Activated naive CD4-positive, alpha-beta T cell treated with anti-CD3 and anti-CD28 coated beads for 36 hours (primary cell): ENCODE measurements at regions of chr2 and their contacts with region 1.

Region 1: GRCh38 chr2:164737612-164738081 is 104.0 kb downstream of the COBLL1 start:
- DNase-seq: peak; percentile 38
- H3K4me3 Mint-ChIP-seq: no peak overlapping the region
- H3K27ac Mint-ChIP-seq: no peak overlapping the region
- H3K4me1 Mint-ChIP-seq: no peaks in the 10 kb centered on the region
- H3K27me3 Mint-ChIP-seq: no peaks in the 10 kb centered on the region

Region 2: DNA sequence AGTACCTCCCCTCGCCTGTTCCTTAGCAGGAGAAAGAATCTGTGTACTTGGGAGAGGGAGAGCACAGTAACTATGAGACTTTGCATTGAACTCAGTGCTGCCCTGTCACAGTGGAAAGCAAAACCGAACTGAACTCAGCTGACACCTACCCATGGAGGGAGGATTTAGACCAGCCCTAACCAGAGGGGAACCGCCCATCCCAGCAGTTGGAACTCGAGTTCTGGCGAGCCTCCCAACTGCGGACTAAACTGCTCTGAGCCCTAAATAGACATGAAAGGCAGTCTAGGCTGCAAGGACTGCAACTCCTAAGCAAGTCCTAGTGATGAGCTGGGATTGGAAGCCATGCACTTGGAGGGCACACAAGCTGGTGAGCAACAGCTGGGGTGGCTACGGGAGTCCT is 226.8 kb before region 1 on chr2:
- CTCF ChIA-PET with region 1: no interaction called
- intact Hi-C with region 1: no loop called
- DNase-seq: no peak
- H3K4me3 Mint-ChIP-seq: no peak overlapping the region
- H3K27ac Mint-ChIP-seq: no peak overlapping the region
- H3K4me1 Mint-ChIP-seq: no peaks in the 10 kb centered on the region
- H3K27me3 Mint-ChIP-seq: no peaks in the 10 kb centered on the region

Region 3: DNA sequence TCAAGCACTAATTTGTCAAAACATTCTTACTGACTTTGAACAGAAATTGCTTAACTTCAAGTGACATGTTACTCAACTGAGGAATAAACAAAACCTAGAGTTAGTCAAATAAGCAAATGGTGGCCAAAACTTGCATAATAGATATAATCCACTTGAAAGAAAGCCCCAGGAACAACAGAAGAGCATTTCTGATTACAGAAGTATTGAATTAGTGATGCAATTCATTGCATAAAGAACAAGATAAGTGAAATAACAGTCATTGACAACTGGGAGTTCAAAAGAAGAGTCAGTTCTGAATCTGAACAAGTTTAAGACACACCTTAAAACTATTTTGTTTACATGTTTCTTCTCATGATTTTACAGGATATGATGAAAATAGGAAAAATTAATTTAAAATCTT is 73.2 kb after region 1 on chr2:
- CTCF ChIA-PET with region 1: no interaction called
- intact Hi-C with region 1: no loop called
- DNase-seq: no peak
- H3K4me3 Mint-ChIP-seq: no peak overlapping the region
- H3K27ac Mint-ChIP-seq: no peak overlapping the region
- H3K4me1 Mint-ChIP-seq: no peaks in the 10 kb centered on the region
- H3K27me3 Mint-ChIP-seq: no peaks in the 10 kb centered on the region

Region 4: DNA sequence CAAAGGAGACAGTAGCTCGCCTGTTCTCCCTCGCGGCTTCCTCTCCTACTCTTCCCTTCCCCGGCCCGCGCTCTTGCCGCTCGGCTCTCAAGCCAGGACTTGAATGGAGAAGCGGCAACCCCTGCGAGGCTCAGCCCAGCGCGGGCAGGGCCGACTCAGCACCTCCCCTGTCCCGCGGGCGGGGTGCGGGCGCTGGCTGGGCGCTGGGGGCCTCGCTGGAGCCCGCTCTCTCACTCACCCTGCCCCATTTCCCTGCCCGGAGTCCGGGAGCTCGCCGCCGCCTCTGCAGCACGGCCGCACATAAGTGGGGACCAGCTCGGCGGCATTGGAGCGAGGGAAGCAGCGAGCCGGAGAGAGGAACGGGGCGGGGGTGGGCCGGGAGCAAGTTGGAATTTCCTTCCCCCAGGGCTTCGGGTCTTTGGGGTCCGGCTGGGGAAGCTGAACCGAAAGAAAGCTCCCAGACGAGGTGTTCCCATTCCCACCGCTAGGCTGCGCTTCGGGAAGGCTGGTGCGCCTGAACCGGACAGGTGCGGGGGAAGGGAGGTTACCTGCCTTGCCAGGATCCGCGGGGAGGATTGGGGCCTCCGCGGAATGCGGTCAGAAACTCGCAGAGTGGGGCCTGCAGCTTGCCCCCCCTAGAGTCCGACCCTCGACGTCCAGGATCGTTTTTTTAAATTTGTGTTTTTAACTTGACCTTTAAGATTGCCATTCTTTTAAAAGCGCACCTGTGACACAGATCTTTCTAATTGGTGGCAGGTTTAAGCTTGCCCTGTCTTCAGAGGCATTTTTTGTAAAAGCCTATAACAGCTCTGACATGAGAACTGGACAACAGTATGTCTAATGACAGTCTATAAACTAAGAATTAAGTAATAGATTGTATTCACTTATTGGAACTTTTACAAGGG is 104.3 kb after region 1 on chr2 and contains the start of gene COBLL1:
- CTCF ChIA-PET with region 1: interaction called, 4 read pairs
- intact Hi-C with region 1: loop called (anchors 5 kb)
- DNase-seq: peak; percentile 47
- H3K4me3 Mint-ChIP-seq: peak within 1 kb of the TSS; percentile 68
- H3K27ac Mint-ChIP-seq: no peak within 1 kb of the TSS
- H3K4me1 Mint-ChIP-seq: peaks cover 5% of the 10 kb centered on the region
- H3K27me3 Mint-ChIP-seq: peaks cover 31% of the 10 kb centered on the region
- total RNA-seq, gene COBLL1: not detected

Region 5: DNA sequence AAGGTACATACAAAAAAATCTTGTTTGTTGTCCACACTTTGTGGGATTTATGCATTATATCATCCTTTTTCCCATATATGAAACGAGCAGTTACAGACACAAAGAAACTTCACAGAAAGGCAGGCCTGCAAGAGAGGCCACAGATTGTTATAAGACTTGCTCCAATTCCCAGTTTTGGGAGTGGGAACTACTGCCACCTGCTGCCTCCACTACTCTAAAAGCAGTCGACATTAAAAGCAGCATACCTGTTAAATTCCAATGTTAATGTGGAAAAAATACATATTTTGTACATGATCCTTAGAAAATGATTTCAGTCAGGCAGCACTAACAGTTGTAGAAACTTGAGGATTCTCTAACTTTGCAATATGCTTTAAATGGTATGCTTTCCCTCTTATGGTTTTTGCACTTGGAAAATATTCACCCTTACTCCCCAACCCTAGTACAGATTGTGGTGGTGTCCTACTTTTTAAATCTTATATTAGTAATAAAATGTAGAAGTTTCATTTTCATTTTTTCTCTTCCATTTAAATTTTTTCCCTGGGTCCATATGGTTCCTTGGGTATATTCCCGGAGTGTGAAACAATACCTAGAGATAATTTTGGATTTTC is 179.8 kb after region 1 on chr2:
- CTCF ChIA-PET with region 1: no interaction called
- intact Hi-C with region 1: loop called (anchors 1 kb)
- DNase-seq: peak; percentile 6
- H3K4me3 Mint-ChIP-seq: no peak overlapping the region
- H3K27ac Mint-ChIP-seq: no peak overlapping the region
- H3K4me1 Mint-ChIP-seq: no peaks in the 10 kb centered on the region
- H3K27me3 Mint-ChIP-seq: peaks cover 6% of the 10 kb centered on the region

Region 6: DNA sequence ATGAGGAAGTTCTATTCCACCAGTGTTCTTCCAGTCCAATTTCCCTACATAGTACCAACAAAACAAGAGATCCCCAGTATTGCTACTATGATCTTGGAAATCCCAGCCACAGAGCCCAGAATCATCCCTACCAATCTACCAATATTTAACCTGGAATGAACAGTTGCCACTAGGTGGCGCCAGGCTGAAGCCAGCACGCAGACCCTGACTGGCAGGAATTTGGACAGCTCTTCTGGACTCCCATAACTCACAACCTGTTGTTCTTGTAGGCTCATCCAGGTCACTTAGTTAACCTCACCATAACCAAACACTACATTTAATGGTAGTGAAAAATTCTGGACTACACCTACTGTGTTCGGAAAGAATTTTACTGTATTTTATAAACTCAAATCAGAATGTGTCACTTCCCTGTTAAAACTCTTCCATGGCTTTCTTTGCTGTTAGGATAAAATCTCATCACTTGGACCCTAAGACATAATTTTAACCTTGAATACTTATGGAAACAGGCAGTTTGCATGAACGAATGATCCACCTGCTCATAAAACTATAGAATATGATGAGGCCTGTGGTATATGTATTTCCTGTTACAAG is 277.5 kb after region 1 on chr2:
- CTCF ChIA-PET with region 1: no interaction called
- intact Hi-C with region 1: loop called (anchors 1 kb)
- DNase-seq: peak; percentile 74
- H3K4me3 Mint-ChIP-seq: no peak overlapping the region
- H3K27ac Mint-ChIP-seq: no peak overlapping the region
- H3K4me1 Mint-ChIP-seq: no peaks in the 10 kb centered on the region
- H3K27me3 Mint-ChIP-seq: peaks cover 9% of the 10 kb centered on the region

Region 7: GRCh38 chr2:165293440-165294353 is 556.0 kb after region 1 on chr2:
- CTCF ChIA-PET with region 1: no interaction called
- intact Hi-C with region 1: loop called (anchors 5 kb)
- DNase-seq: peak; percentile 52
- H3K4me3 Mint-ChIP-seq: no peak overlapping the region
- H3K27ac Mint-ChIP-seq: no peak overlapping the region
- H3K4me1 Mint-ChIP-seq: peaks cover 5% of the 10 kb centered on the region
- H3K27me3 Mint-ChIP-seq: peaks cover 10% of the 10 kb centered on the region